Colonic mucosa (tissue), 4 donors: ENCODE measurements at regions of chr4 and their contacts with region 1.

Region 1: GRCh38 chr4:154779362-154779947 is 1.6 kb upstream of the RBM46 start:
- DNase-seq: no peak
- H3K4me3 ChIP-seq: no peak overlapping the region
- H3K27ac ChIP-seq: no peak overlapping the region
- H3K4me1 ChIP-seq: no peaks in the 10 kb centered on the region
- H3K27me3 ChIP-seq: no peaks in the 10 kb centered on the region
- CTCF ChIP-seq: peak; percentile 28

Region 2: GRCh38 chr4:153281476-153281875 is 1498.0 kb before region 1 on chr4:
- intact Hi-C with region 1: no loop called
- DNase-seq: no peak
- H3K4me3 ChIP-seq: no peak overlapping the region
- H3K27ac ChIP-seq: no peak overlapping the region
- H3K4me1 ChIP-seq: no peaks in the 10 kb centered on the region
- H3K27me3 ChIP-seq: no peaks in the 10 kb centered on the region
- CTCF ChIP-seq: no peak

Region 3: GRCh38 chr4:154551872-154552686 is 227.4 kb before region 1 on chr4:
- intact Hi-C with region 1: loop called (anchors 10 kb)
- DNase-seq: peak; percentile 76
- H3K4me3 ChIP-seq: no peak overlapping the region
- H3K27ac ChIP-seq: no peak overlapping the region
- H3K4me1 ChIP-seq: peaks cover 6% of the 10 kb centered on the region
- H3K27me3 ChIP-seq: no peaks in the 10 kb centered on the region
- CTCF ChIP-seq: peak; percentile 73

Region 4: DNA sequence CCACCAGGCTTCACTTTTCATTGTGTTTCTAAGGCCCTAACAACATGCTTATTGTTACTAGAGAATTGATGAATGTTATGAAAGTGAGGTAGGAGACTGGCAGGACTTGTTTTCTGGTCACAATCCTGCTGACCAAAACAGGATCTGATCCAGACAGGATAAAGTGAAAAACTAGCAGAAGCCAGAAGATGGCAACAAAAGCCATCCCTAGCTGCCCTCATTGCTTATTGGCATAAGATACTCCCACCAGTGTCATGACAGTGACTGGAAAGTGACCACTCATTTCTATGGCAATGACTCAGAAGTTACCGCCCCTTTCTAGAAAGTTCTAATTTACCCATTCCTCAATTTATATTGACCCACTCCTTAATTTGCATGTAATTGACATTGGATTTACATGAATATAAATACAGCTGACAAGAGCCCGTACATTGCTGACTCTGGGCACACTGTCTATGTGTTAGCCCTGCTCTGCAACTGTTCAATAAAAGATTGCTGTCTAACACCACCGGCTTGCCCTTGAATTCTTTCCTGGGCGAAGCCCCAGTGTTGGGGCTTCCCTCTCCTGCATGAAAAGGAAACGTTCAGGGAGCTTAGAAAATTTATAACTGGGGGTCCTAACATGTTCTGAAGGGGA is 137.0 kb before region 1 on chr4:
- intact Hi-C with region 1: loop called (anchors 5 kb)
- DNase-seq: no peak
- H3K4me3 ChIP-seq: no peak overlapping the region
- H3K27ac ChIP-seq: no peak overlapping the region
- H3K4me1 ChIP-seq: no peaks in the 10 kb centered on the region
- H3K27me3 ChIP-seq: no peaks in the 10 kb centered on the region
- CTCF ChIP-seq: no peak

Region 5: DNA sequence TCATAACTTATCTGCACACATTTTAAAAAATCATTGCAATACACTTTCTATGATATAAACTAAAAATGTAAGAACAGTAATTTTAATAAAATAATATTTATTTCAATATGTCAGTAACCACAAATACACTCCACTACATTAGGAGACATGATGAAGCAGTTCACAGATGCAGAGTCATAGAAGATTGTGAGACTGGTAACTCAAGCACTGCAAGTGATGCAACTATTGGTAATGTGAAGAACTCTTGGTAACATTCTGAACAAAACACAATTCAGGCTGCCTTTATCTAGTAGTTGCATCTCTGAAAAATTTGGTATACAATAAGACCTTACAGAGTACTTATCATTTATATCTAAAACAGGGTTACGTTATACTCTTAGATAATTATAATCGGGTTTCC is 88.2 kb before region 1 on chr4:
- intact Hi-C with region 1: no loop called
- DNase-seq: no peak
- H3K4me3 ChIP-seq: no peak overlapping the region
- H3K27ac ChIP-seq: no peak overlapping the region
- H3K4me1 ChIP-seq: no peaks in the 10 kb centered on the region
- H3K27me3 ChIP-seq: no peaks in the 10 kb centered on the region
- CTCF ChIP-seq: no peak